Aorta (tissue), 5 donors: ENCODE measurements at regions of chr20 and their contacts with region 1.

Region 1: DNA sequence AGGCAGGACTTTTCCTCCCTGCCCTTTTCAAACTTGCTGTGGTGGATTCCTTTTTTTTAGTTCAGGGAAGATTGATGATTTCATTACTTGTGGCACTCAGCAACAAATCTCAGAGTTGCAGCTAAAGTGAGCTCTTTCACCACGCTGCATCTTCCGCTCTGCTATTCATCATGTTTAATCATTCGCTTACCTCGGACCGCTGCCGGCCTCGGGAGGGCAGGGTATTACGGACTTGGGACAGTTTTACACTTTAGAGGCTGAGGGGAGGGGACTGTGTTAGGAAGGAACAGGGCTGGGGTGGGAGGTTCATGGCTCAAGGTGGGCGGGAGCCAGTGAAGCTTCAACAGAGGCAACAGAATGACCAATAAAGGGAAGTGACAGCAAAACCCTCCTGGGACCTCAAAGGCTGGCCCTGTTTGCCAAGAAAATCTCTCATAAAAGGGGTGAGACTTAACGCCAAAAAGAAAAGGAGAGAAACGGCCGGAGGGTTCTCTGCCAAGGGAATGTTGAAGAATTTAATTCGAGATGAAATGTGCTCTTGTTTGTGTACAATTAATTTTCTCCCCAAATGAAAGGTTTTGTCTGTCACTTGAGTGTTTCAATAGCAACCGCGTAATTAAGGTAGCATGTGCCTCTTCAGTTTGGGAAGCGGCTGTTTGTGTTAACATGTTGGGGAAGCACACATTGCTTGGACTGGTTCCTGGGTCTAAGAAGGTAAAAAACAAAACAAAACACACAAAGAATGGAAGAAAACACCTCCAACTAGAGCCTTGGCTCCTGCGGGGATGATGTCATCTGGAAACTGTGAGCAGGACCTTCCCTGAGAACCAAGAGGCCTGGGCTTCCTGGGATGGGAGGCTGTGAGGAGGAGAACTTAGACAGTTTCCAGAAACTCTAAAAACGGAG is 72.5 kb upstream of the SULF2 start:
- DNase-seq: peak; percentile 59 to 82
- ATAC-seq: peak; percentile 85
- H3K4me3 ChIP-seq: no peak overlapping the region
- H3K27ac ChIP-seq: peak overlapping the region; percentile 29 to 58
- H3K4me1 ChIP-seq: peaks cover 0 to 2% of the 10 kb centered on the region in 2 donors
- H3K27me3 ChIP-seq: no peaks in the 10 kb centered on the region

Region 2: DNA sequence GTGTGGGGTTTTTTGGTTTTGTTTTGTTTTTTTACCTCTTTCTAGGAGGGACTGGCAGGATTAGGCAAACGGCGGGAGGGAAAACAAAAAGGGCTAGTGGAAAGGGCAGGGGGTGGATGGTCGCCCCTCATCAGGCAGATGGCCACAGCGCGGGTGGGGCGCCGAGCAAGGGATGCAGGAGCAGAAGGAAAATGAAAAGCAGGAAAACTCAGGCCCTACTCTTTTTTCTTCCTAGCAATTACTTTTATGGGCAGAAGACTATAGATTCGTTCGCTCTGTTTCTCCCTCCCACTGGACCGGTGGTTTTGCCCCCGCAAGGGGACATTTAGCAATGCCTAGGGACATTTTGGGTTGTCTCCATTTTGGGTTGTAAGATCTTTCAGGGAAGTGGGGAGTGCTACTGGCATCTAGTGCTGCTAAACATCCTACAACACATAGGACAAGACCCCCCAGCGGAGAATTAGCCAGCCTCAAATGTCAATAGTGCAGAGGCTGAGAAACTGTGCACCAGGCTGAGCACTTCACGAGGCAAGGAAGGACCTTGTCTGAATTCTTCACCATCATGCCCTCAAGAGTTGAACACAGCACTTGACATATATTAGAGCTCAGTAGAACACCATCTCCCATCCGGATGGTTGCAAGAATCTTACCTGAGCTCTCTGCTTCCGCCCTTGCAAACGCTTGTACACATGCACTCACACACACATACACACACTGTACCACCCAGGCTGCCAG is 496.6 kb before region 1 on chr20:
- intact Hi-C with region 1: no loop called
- DNase-seq: no peak
- ATAC-seq: no peak
- H3K4me3 ChIP-seq: no peak overlapping the region
- H3K27ac ChIP-seq: peak overlapping the region; percentile 87 to 100
- H3K4me1 ChIP-seq: peaks cover 4 to 5% of the 10 kb centered on the region in 2 donors
- H3K27me3 ChIP-seq: no peaks in the 10 kb centered on the region

Region 3: DNA sequence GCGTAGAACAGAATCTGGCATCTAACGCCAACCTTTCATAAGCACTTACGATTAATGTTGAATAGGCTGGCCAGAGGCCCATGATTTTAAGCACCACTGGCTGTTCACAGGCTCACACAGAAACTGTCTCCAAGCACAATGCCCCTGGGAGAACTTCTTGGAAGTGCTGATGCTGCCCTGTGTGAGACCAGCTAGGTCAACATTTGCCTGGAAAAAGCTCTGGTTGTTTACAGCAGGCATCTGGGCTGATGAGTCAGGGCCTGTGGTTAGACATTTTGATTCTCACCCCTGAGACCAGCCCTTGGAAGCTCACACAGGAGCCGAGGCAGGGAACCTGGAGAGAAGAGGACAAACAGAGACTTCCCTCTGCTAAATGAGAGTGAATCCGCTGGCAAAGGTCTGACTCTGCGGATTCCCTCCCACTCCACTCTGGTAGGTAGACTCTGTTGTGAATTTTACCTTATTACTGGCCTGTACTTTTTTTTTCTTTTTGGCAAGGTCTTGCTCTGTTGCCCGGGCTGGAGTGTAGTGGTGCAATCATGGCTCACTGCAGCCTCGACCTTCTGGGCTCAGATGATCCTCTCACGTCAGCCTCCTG is 65.7 kb before region 1 on chr20:
- intact Hi-C with region 1: loop called (anchors 5 kb)
- DNase-seq: peak; percentile 84 to 88
- ATAC-seq: peak; percentile 88
- H3K4me3 ChIP-seq: no peak overlapping the region
- H3K27ac ChIP-seq: peak overlapping the region in 1 of 2 donors; percentile 55
- H3K4me1 ChIP-seq: no peaks in the 10 kb centered on the region
- H3K27me3 ChIP-seq: no peaks in the 10 kb centered on the region

Region 4: DNA sequence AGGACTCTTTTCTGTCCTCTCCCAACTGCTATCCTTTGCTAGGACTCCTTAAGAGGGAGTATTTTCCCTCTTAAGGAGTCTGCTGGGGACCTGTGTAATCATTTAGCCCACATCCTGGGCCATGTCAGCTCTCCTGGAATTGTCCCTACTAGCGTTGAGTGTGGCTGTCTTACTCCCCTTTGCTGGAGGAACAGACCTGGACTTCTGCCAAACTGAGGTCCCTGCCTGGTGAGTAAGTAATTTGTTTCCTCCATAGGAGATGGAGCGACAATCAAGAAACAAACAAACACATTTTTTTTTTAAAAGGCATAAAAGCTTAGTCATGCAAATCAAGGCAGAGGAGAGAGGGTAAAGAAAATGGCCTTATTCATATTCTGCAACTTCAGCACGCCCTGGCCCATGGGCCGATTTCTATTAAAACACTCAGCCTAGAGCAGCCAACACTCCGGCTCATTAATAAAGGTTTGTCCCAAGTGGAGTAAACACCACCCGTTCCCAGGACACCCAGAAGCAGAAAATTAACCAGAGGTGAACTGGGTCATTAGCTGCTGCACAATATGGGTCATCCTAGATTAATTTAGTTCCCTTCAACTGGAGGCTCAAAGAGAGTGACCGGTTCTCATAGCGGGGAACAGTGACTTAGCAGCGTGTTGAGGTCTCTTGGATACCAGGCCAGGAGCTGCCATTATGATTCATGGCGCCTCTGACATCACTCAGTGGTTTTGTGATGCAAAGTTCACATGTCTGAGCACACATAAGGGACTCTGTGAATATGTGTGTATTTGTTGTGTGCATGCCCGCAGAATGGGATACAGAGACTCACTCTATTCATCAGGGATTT is 92.5 kb after region 1 on chr20:
- intact Hi-C with region 1: no loop called
- DNase-seq: no peak
- ATAC-seq: no peak
- H3K4me3 ChIP-seq: no peak overlapping the region
- H3K27ac ChIP-seq: no peak overlapping the region
- H3K4me1 ChIP-seq: no peaks in the 10 kb centered on the region
- H3K27me3 ChIP-seq: no peaks in the 10 kb centered on the region